PC-3 (cell line): ENCODE measurements at regions of chr10 and their contacts with region 1.

Region 1: DNA sequence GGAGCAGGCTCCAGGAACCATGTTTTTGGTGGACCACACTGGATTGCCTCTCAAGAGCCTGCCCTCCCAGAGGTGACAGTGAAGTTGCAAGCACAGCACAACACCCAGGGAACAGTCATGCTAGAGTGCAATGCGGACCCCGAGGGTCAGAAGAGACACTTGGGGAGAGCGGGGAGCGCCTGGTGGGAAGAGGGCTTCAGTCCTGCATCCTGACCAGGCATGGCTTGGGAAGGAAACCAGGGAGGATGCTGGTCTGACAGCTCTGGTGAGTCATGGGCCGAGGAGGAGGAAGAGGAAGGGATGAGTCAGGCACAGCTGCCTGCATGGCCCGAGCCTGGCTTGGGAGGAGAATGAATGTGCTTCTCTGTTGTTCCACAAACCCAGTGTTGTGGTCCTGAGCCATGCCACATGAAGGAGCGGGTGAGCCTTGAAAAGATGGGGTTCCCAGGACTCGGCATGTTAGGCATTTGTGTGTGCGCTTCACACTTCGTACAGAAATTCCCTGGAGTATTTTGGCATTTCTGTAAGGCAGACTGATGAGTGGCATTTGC is 29.5 kb upstream of the ANKRD2 start:
- DNase-seq: peak; percentile 88
- ATAC-seq: peak; percentile 76
- H3K4me3 ChIP-seq: peak overlapping the region; percentile 23; the same call in 1 of the 2 replicates
- H3K27ac ChIP-seq: peak overlapping the region; percentile 99
- H3K4me1 ChIP-seq: peaks cover 41% of the 10 kb centered on the region
- H3K27me3 ChIP-seq: no peaks in the 10 kb centered on the region
- CTCF ChIP-seq: no peak

Region 2: GRCh38 chr10:97479939-97480338 is 63.2 kb before region 1 on chr10:
- CTCF ChIA-PET with region 1: no interaction called
- POLR2A ChIA-PET with region 1: no interaction called
- intact Hi-C with region 1: loop called (anchors 5 kb)
- DNase-seq: no peak
- ATAC-seq: no peak
- H3K4me3 ChIP-seq: no peak overlapping the region
- H3K27ac ChIP-seq: peak overlapping the region; percentile 89
- H3K4me1 ChIP-seq: peaks cover 39% of the 10 kb centered on the region
- H3K27me3 ChIP-seq: no peaks in the 10 kb centered on the region
- CTCF ChIP-seq: no peak

Region 3: DNA sequence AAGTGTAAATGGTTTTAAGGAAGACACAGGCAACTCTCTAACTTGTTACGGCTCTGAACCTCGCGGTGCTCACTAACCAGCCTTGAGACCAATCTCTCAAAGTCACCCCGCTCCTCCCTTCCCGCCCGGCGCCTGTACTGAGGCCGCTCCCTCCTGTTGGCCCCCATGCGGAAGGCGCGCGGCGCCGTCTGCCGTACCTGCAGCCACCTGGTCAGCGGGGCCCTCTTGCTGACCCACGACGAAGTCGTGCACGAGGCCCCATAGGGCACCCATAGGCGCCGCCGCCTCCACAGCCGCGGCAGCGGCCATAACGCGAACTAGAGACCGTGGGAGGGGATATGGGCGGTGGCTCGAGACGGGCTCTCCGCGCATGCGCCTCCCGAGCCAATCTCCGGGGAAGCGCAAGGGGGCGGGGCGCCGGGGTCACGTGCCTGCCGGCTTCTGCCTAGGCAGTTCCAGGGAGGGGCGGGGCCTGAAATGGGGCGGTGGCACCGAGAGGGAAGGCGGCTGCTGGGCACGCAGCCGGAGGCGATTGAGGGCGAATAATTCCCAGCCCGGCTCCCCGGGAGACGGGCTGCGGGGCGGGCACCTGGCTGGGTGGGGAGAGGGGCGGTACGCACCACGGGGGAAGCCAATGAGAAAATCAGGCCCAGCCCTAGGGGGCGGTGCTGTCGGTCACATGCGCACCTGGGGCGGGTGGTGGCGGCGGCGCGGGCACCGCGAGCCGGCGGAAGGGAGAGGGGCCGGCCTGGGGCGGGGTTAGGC is 44.8 kb before region 1 on chr10 and contains the start of gene MMS19:
- CTCF ChIA-PET with region 1: no interaction called
- POLR2A ChIA-PET with region 1: no interaction called
- intact Hi-C with region 1: loop called (anchors 2 kb)
- DNase-seq: peak; percentile 93
- ATAC-seq: peak; percentile 60
- H3K4me3 ChIP-seq: peak within 1 kb of the TSS; percentile 96
- H3K27ac ChIP-seq: peak within 1 kb of the TSS; percentile 85
- H3K4me1 ChIP-seq: peaks cover 19% of the 10 kb centered on the region
- H3K27me3 ChIP-seq: no peaks in the 10 kb centered on the region
- CTCF ChIP-seq: no peak
- total RNA-seq, gene MMS19: 65.5 and 78.2 TPM in 2 replicates

Region 4: GRCh38 chr10:97736902-97737769 is 194.0 kb after region 1 on chr10 and contains the start of gene ZFYVE27:
- CTCF ChIA-PET with region 1: no interaction called
- POLR2A ChIA-PET with region 1: no interaction called
- intact Hi-C with region 1: no loop called
- DNase-seq: peak; percentile 92
- ATAC-seq: peak; percentile 87
- H3K4me3 ChIP-seq: peak within 1 kb of the TSS; percentile 83
- H3K27ac ChIP-seq: peak within 1 kb of the TSS; percentile 40; the same call in 1 of the 2 replicates
- H3K4me1 ChIP-seq: peaks cover 9% of the 10 kb centered on the region
- H3K27me3 ChIP-seq: no peaks in the 10 kb centered on the region
- CTCF ChIP-seq: no peak
- total RNA-seq, gene ZFYVE27: 13.1 and 15.0 TPM in 2 replicates